Transverse colon (tissue), 4 donors: ENCODE measurements at regions of chr18 and their contacts with region 1.

Region 1: GRCh38 chr18:70044632-70045031 is 97.0 kb upstream of the CD226 start:
- DNase-seq: no peak
- H3K4me3 ChIP-seq: no peak overlapping the region
- H3K27ac ChIP-seq: no peak overlapping the region
- H3K4me1 ChIP-seq: no peaks in the 10 kb centered on the region
- H3K27me3 ChIP-seq: no peaks in the 10 kb centered on the region
- CTCF ChIP-seq: no peak
- EP300 ChIP-seq: no peak
- POLR2A ChIP-seq: no peak

Region 2: GRCh38 chr18:69659142-69659651 is 385.4 kb before region 1 on chr18:
- in situ Hi-C with region 1: no loop called
- intact Hi-C with region 1: no loop called
- DNase-seq: no peak
- H3K4me3 ChIP-seq: no peak overlapping the region
- H3K27ac ChIP-seq: no peak overlapping the region
- H3K4me1 ChIP-seq: no peaks in the 10 kb centered on the region
- H3K27me3 ChIP-seq: no peaks in the 10 kb centered on the region
- CTCF ChIP-seq: no peak
- EP300 ChIP-seq: no peak
- POLR2A ChIP-seq: no peak

Region 3: GRCh38 chr18:69885841-69886531 is 158.6 kb before region 1 on chr18:
- in situ Hi-C with region 1: no loop called
- intact Hi-C with region 1: no loop called
- DNase-seq: no peak
- H3K4me3 ChIP-seq: no peak overlapping the region
- H3K27ac ChIP-seq: no peak overlapping the region
- H3K4me1 ChIP-seq: peaks cover 0 to 7% (median 0%) of the 10 kb centered on the region in 4 donors
- H3K27me3 ChIP-seq: no peaks in the 10 kb centered on the region
- CTCF ChIP-seq: no peak
- EP300 ChIP-seq: no peak
- POLR2A ChIP-seq: no peak

Region 4: DNA sequence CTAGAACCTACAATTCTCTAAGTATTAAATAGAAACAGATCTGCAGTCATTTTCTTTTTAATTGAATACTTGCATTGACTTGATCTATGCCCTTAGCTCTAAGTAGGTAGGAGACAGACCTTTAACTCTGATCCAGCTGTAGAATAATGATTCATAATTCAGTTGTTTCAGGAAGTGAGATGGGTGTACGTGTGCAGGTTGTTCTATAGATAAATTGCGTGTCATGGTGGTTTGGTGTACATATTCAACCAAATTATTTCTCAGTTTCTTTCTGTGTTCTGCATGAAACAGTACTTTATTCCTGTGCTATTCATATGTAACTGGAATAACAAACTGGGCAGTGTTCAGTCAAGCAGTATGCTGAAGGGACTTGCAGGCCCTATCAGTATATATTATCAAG is 62.7 kb before region 1 on chr18:
- in situ Hi-C with region 1: no loop called
- intact Hi-C with region 1: loop called (anchors 10 kb)
- DNase-seq: no peak
- H3K4me3 ChIP-seq: no peak overlapping the region
- H3K27ac ChIP-seq: no peak overlapping the region
- H3K4me1 ChIP-seq: no peaks in the 10 kb centered on the region
- H3K27me3 ChIP-seq: no peaks in the 10 kb centered on the region
- CTCF ChIP-seq: no peak
- EP300 ChIP-seq: no peak
- POLR2A ChIP-seq: no peak

Region 5: DNA sequence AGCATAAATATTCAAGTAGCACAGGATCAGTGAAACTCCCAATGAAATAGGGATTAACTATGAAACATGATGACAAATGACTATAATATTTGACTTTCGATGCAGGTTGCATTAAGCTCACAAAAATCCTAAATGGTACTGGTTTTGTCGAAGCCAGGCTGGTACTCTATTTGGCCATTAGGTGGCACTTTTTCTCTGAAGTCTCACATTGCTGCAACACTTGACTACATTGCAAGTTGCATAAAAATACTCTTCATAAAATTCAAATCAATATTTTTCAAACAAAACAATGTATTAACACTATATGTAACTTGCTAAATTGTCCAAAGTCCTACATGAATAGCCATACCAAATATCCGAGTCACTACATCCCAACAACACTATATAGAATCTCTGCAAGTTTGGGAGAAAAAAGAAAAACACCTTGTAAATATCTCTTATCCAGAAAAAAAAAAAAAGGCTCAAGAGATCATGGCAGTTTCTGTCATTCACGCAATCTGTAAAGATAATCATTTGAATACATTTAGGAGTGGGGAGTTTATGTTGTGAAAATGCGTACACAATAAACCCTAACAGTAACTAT is 151.3 kb after region 1 on chr18:
- in situ Hi-C with region 1: no loop called
- intact Hi-C with region 1: no loop called
- DNase-seq: peak; percentile 9
- H3K4me3 ChIP-seq: no peak overlapping the region
- H3K27ac ChIP-seq: no peak overlapping the region
- H3K4me1 ChIP-seq: no peaks in the 10 kb centered on the region
- H3K27me3 ChIP-seq: no peaks in the 10 kb centered on the region
- CTCF ChIP-seq: peak; percentile 75 to 79 (median 77)
- EP300 ChIP-seq: no peak
- POLR2A ChIP-seq: no peak